Naive thymus-derived CD4-positive, alpha-beta T cell (primary cell): ENCODE measurements at regions of chr19 and their contacts with region 1.

Region 1: GRCh38 chr19:23758187-23759074 is at the start of gene ZNF681:
- DNase-seq: peak; percentile 56 to 93 (median 89)
- ATAC-seq: peak; percentile 93
- H3K4me3 ChIP-seq: peak within 1 kb of the TSS; percentile 95
- H3K4me3 Mint-ChIP-seq: peak within 1 kb of the TSS; percentile 87 to 96 (median 92)
- H3K27ac ChIP-seq: peak within 1 kb of the TSS; percentile 91
- H3K27ac Mint-ChIP-seq: peak within 1 kb of the TSS; percentile 89 to 97 (median 94)
- H3K4me1 ChIP-seq: peaks cover 0 to under 1% of the 10 kb centered on the region in 2 donors
- H3K4me1 Mint-ChIP-seq: peaks cover 12 to 48% (median 29%) of the 10 kb centered on the region in 7 donors
- H3K27me3 ChIP-seq: no peaks in the 10 kb centered on the region
- H3K27me3 Mint-ChIP-seq: no peaks in the 10 kb centered on the region
- total RNA-seq, gene ZNF681: 1.8 to 12.9 (median 4.4) TPM

Region 2: GRCh38 chr19:22634450-22634827 is 1124.0 kb before region 1 on chr19:
- CTCF ChIA-PET with region 1: no interaction called
- POLR2A ChIA-PET with region 1: no interaction called
- intact Hi-C with region 1: loop called in 1 of 2 experiments (anchors 1 kb)
- DNase-seq: no peak
- ATAC-seq: no peak
- H3K4me3 ChIP-seq: peak overlapping the region; percentile 63
- H3K4me3 Mint-ChIP-seq: peak overlapping the region; percentile 70 to 98 (median 93)
- H3K27ac ChIP-seq: peak overlapping the region; percentile 55
- H3K27ac Mint-ChIP-seq: peak overlapping the region in 8 of 9 donors; percentile 59 to 95 (median 82)
- H3K4me1 ChIP-seq: no peaks in the 10 kb centered on the region
- H3K4me1 Mint-ChIP-seq: peaks cover 0 to 16% (median 5%) of the 10 kb centered on the region in 7 donors
- H3K27me3 ChIP-seq: no peaks in the 10 kb centered on the region
- H3K27me3 Mint-ChIP-seq: no peaks in the 10 kb centered on the region

Region 3: GRCh38 chr19:23273590-23274413 is 484.6 kb before region 1 on chr19:
- CTCF ChIA-PET with region 1: no interaction called
- POLR2A ChIA-PET with region 1: interaction called, 10 read pairs
- intact Hi-C with region 1: loop called in 1 of 2 experiments (anchors 1 kb)
- DNase-seq: peak; percentile 76 to 93 (median 91)
- ATAC-seq: peak; percentile 100
- H3K4me3 ChIP-seq: peak overlapping the region; percentile 94
- H3K4me3 Mint-ChIP-seq: peak overlapping the region; percentile 94 to 99 (median 98)
- H3K27ac ChIP-seq: peak overlapping the region; percentile 95
- H3K27ac Mint-ChIP-seq: peak overlapping the region; percentile 92 to 98 (median 96)
- H3K4me1 ChIP-seq: peaks cover 0 to 7% of the 10 kb centered on the region in 2 donors
- H3K4me1 Mint-ChIP-seq: peaks cover 15 to 47% (median 30%) of the 10 kb centered on the region in 7 donors
- H3K27me3 ChIP-seq: no peaks in the 10 kb centered on the region
- H3K27me3 Mint-ChIP-seq: no peaks in the 10 kb centered on the region

Region 4: DNA sequence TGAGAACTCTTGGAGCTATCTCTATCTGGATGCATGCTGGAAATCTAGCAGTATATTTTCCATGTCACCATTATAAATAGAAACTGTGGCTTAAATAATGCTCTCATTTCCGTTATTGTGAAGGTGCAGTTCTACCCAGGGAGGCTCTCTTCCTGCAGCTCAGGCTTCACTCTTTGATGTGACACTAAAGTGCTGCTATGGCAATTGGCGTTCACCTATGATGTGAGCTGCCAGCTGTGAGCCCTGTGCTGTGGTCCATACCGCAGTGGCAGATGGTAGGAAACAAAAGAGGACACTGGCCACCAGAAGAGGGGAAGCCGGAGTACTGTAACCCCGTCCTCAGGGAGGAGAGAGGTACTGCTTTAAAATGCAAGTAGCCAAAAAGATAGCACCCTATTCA is 40.9 kb after region 1 on chr19:
- CTCF ChIA-PET with region 1: interaction called, 3 read pairs
- POLR2A ChIA-PET with region 1: interaction called, 8 read pairs
- intact Hi-C with region 1: loop called (anchors 1 to 5 kb)
- DNase-seq: peak in 7 of 9 donors; percentile 46 to 66 (median 61)
- ATAC-seq: peak; percentile 92
- H3K4me3 ChIP-seq: peak overlapping the region; percentile 31
- H3K4me3 Mint-ChIP-seq: peak overlapping the region; percentile 77 to 91 (median 84)
- H3K27ac ChIP-seq: peak overlapping the region; percentile 67
- H3K27ac Mint-ChIP-seq: peak overlapping the region; percentile 84 to 97 (median 92)
- H3K4me1 ChIP-seq: peaks cover 6% of the 10 kb centered on the region in 2 donors
- H3K4me1 Mint-ChIP-seq: peaks cover 10 to 49% (median 34%) of the 10 kb centered on the region in 7 donors
- H3K27me3 ChIP-seq: no peaks in the 10 kb centered on the region
- H3K27me3 Mint-ChIP-seq: no peaks in the 10 kb centered on the region

Region 5: DNA sequence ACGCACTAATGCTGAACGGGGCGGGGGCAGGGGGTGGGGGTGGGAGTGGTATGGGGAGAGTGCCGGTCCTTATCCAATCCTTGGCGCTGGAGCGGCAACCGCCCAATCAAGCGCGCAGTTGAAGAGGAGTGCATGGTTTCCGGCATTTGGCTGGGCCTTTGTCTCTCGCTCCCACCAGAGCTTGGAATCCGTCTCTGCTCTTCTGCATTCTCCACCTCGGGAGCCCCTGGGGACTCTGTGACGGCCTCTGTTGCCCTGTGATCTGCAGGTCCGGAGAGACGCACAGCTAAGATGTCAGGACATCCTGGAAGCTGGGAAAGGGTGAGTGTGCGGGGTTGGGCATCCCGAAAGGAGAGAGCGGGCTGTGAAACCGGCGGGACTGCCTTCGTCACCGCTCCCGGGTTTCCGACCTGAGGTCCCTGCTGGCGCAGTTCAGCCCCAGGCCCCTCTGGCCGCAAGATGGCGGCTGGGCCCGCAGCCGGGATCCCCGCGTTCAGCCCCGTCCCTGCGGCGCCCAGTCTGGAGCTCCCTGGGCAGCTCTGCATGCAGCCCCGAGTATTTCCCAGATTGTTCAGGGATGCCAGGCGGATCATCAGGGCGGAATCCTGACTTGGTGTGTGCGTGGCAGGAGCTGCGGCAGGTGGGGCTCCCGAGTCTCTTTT is 275.0 kb after region 1 on chr19:
- CTCF ChIA-PET with region 1: no interaction called
- POLR2A ChIA-PET with region 1: interaction called, 8 read pairs
- intact Hi-C with region 1: loop called (anchors 1 to 2 kb)
- DNase-seq: peak; percentile 50 to 89 (median 84)
- ATAC-seq: peak; percentile 99
- H3K4me3 ChIP-seq: peak overlapping the region; percentile 100
- H3K4me3 Mint-ChIP-seq: peak overlapping the region; percentile 99 to 100 (median 100)
- H3K27ac ChIP-seq: peak overlapping the region; percentile 90
- H3K27ac Mint-ChIP-seq: peak overlapping the region; percentile 96 to 100 (median 98)
- H3K4me1 ChIP-seq: peaks cover 11 to 24% of the 10 kb centered on the region in 2 donors
- H3K4me1 Mint-ChIP-seq: peaks cover 18 to 63% (median 56%) of the 10 kb centered on the region in 7 donors
- H3K27me3 ChIP-seq: no peaks in the 10 kb centered on the region
- H3K27me3 Mint-ChIP-seq: no peaks in the 10 kb centered on the region